ENCODE measurements at regions of chr6 and their contacts with region 1.

Region 1: DNA sequence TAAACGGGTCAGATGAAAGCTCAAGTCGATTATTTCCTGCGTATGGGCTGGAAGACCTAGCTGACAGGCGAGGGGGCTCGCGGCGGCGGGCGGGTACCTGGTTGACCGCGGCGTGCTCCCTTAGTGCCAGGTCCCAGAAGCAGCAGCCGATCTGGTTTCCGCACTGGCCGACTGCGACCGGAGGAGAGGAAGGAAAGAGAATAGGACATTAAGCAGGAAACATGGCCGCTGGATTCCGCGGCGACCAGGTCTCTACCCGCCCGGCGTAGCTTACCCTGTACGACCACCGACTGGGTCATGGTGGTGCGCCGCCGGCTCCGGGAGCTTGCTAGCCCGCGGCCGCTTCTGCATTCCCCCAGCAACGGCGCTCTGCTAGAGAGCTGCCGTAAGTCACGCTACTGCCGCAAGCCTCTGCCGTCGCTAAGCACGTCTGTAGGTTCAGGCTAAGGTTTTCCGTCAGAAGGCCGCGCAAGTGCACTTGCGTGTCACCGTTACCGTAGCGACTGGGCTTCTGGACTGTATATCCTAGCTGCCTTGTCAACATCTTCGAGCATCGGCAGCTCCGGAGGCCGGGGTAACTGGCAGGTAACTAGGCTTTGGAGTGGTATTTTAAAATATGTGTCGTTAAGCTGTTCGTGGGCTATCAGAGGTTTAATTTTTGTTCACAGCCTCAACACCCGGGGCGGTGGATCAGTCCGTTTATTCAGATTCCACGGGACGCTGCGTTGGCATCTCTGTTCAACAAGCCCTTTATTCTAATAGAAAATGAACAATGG is at the starts of genes FAM229B and TUBE1:
- DNase-seq: peak; percentile 82 to 97
- ATAC-seq: peak; percentile 95 to 99 (median 96)
- H3K4me3 ChIP-seq: peak within 1 kb of the TSS; percentile 86
- H3K4me3 Mint-ChIP-seq: no peak within 1 kb of the TSS
- H3K27ac ChIP-seq: peak within 1 kb of the TSS; percentile 90
- H3K27ac Mint-ChIP-seq: no peak within 1 kb of the TSS
- H3K4me1 ChIP-seq: no peaks in the 10 kb centered on the region
- H3K4me1 Mint-ChIP-seq: peaks cover 0 to 5% of the 10 kb centered on the region in 2 donors
- H3K27me3 ChIP-seq: peaks cover 20% of the 10 kb centered on the region
- H3K27me3 Mint-ChIP-seq: peaks cover 26 to 34% of the 10 kb centered on the region in 2 donors
- CTCF ChIP-seq: no peak
- total RNA-seq, gene FAM229B: 0.97 to 1.1 (median 0.99) TPM
- total RNA-seq, gene TUBE1: 15.6 to 31.2 (median 23.7) TPM

Region 2: DNA sequence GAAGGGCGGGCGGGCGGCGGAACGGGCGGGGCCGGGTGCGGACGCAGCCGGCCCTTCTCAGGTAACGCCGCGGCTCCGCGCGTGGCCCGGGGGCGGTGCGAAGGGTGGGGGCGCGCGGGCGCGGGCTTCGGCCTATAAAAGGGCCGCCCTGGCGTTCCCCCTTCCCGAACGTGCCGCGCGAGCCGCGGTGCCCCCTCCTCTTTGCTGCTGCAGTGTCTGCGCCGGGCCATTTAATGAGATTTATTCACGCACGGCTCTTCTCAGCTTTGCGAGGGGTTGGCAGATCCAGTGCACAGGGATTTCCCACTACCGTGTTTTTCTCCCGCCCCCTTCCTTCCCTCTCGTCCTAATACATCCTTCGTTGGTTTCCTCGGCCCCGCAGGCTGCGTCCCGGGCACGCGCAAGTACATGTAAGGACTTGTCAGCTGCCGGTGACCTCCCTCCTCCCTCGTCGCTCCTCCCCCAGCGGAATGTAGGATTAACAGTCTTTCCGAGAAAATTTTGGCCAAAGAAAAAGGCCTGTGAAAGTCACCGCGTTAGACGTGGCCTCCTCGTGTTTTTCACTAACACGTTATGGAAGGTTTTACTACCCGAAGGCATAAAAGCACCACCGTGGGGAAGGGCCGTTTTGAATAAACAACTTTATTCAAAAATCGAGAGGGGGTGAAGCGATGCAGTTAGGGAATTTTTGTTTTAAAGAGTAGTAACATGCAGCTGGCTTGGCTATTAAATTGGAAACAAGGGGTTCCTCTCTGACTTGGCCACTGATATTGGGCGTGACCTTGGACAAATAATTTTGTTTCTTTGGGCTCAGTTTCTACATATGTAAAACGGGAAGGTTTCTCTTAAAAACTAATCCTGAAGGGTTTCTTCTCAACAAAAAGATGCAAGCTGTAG is 603.3 kb before region 1 on chr6:
- intact Hi-C with region 1: loop called (anchors 5 kb)
- DNase-seq: peak in 1 of 2 donors; percentile 92
- ATAC-seq: peak; percentile 34 to 82 (median 61)
- H3K4me3 ChIP-seq: peak overlapping the region; percentile 90
- H3K4me3 Mint-ChIP-seq: peak overlapping the region; percentile 96
- H3K27ac ChIP-seq: peak overlapping the region; percentile 97
- H3K27ac Mint-ChIP-seq: peak overlapping the region; percentile 96 to 98
- H3K4me1 ChIP-seq: peaks cover 9% of the 10 kb centered on the region
- H3K4me1 Mint-ChIP-seq: peaks cover 44 to 45% of the 10 kb centered on the region in 2 donors
- H3K27me3 ChIP-seq: no peaks in the 10 kb centered on the region
- H3K27me3 Mint-ChIP-seq: no peaks in the 10 kb centered on the region
- CTCF ChIP-seq: no peak

Region 3: GRCh38 chr6:111957623-111958315 is 129.6 kb before region 1 on chr6:
- intact Hi-C with region 1: no loop called
- DNase-seq: no peak
- ATAC-seq: no peak
- H3K4me3 ChIP-seq: no peak overlapping the region
- H3K4me3 Mint-ChIP-seq: no peak overlapping the region
- H3K27ac ChIP-seq: no peak overlapping the region
- H3K27ac Mint-ChIP-seq: no peak overlapping the region
- H3K4me1 ChIP-seq: no peaks in the 10 kb centered on the region
- H3K4me1 Mint-ChIP-seq: no peaks in the 10 kb centered on the region
- H3K27me3 ChIP-seq: no peaks in the 10 kb centered on the region
- H3K27me3 Mint-ChIP-seq: peaks cover 3 to 5% of the 10 kb centered on the region in 2 donors
- CTCF ChIP-seq: no peak

Region 4: GRCh38 chr6:111973118-111973761 is 114.1 kb before region 1 on chr6:
- intact Hi-C with region 1: no loop called
- DNase-seq: peak; percentile 26 to 86
- ATAC-seq: peak; percentile 74 to 84 (median 83)
- H3K4me3 ChIP-seq: no peak overlapping the region
- H3K4me3 Mint-ChIP-seq: peak overlapping the region; percentile 4
- H3K27ac ChIP-seq: peak overlapping the region; percentile 67
- H3K27ac Mint-ChIP-seq: peak overlapping the region; percentile 75 to 85
- H3K4me1 ChIP-seq: peaks cover 9% of the 10 kb centered on the region
- H3K4me1 Mint-ChIP-seq: peaks cover 15% of the 10 kb centered on the region in 2 donors
- H3K27me3 ChIP-seq: no peaks in the 10 kb centered on the region
- H3K27me3 Mint-ChIP-seq: peaks cover 0 to 11% of the 10 kb centered on the region in 2 donors
- CTCF ChIP-seq: no peak

Region 5: DNA sequence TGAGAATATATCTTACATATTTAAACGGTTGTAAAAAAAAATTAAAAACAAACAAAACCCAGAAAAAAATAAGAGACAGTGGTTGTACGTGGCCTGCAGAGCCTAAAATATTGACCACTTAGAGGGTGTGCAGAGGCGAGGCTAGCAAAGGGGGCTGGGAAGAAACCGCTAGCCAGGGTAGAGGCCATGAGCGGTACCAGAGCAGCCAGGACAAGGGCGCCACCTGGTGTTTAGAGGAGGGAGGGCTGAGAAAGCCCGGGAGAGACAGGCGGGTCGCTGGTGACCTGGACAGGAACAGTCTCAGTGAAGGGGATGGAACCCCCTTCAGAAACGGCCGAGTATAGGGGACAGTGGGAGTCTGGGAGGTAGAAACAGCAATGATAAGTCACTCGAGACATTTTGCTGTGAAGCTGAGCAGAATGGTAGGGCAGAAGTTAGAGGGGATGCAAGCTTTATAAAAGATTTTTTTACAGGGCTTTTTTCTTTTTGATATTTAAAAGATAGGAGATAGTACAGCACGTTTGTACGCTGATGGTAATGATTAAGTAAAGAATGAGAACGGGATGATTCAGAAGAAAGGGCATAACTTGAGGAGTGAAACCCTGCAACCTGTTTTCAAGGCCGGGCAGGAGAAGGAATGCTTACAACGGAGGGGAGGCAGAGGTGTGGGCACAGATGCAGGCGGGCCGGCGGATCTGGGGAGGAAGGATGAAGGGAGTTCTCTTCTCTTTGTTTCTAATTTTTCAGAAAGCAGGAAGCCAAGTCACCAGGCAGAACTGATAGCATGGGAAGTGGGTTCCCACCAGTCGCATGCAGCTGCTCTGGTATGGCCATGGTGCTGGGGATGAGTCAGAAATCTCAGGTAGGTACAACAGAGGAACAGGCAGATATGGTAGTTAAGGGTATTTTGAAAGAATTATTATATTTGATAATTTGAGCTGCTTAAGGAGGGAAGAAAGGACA is 76.3 kb after region 1 on chr6:
- intact Hi-C with region 1: loop called (anchors 2 kb)
- DNase-seq: peak; percentile 66 to 84
- ATAC-seq: peak; percentile 88 to 99 (median 99)
- H3K4me3 ChIP-seq: no peak overlapping the region
- H3K4me3 Mint-ChIP-seq: no peak overlapping the region
- H3K27ac ChIP-seq: no peak overlapping the region
- H3K27ac Mint-ChIP-seq: no peak overlapping the region
- H3K4me1 ChIP-seq: peaks cover 4% of the 10 kb centered on the region
- H3K4me1 Mint-ChIP-seq: peaks cover 6 to 7% of the 10 kb centered on the region in 2 donors
- H3K27me3 ChIP-seq: peaks cover 9% of the 10 kb centered on the region
- H3K27me3 Mint-ChIP-seq: peaks cover 52 to 74% of the 10 kb centered on the region in 2 donors
- CTCF ChIP-seq: peak; percentile 91

Region 6: GRCh38 chr6:112180095-112180820 is 92.9 kb after region 1 on chr6:
- intact Hi-C with region 1: no loop called
- DNase-seq: peak in 1 of 2 donors; percentile 89
- ATAC-seq: peak; percentile 68 to 79 (median 70)
- H3K4me3 ChIP-seq: no peak overlapping the region
- H3K4me3 Mint-ChIP-seq: no peak overlapping the region
- H3K27ac ChIP-seq: no peak overlapping the region
- H3K27ac Mint-ChIP-seq: no peak overlapping the region
- H3K4me1 ChIP-seq: no peaks in the 10 kb centered on the region
- H3K4me1 Mint-ChIP-seq: no peaks in the 10 kb centered on the region
- H3K27me3 ChIP-seq: peaks cover 4% of the 10 kb centered on the region
- H3K27me3 Mint-ChIP-seq: peaks cover 44 to 78% of the 10 kb centered on the region in 2 donors
- CTCF ChIP-seq: peak; percentile 97

Region 7: DNA sequence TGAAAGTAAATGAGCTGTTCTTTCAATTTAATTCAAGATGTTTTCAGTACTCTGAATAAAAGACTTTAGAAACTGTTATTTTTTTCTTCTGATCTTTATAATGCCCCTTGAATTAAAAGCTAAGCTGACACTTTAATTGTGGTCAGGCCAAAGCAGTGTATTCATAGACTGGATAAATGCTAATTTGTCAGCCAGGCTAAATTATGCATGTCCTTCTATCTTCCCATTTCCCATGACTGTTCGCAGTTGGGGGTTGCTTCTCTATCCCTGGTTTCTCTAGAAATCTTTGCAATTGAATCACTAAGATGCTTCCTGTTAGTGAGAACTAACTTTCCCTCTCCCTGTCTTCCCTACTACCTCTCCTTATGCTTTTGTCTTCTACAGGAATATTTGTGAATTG is 656.0 kb after region 1 on chr6:
- intact Hi-C with region 1: no loop called
- DNase-seq: no peak
- ATAC-seq: no peak
- H3K4me3 ChIP-seq: no peak overlapping the region
- H3K4me3 Mint-ChIP-seq: no peak overlapping the region
- H3K27ac ChIP-seq: no peak overlapping the region
- H3K27ac Mint-ChIP-seq: no peak overlapping the region
- H3K4me1 ChIP-seq: no peaks in the 10 kb centered on the region
- H3K4me1 Mint-ChIP-seq: no peaks in the 10 kb centered on the region
- H3K27me3 ChIP-seq: no peaks in the 10 kb centered on the region
- H3K27me3 Mint-ChIP-seq: no peaks in the 10 kb centered on the region
- CTCF ChIP-seq: no peak